Lower leg skin (tissue), 4 donors: ENCODE measurements at regions of chr15 and their contacts with region 1.

Region 1: DNA sequence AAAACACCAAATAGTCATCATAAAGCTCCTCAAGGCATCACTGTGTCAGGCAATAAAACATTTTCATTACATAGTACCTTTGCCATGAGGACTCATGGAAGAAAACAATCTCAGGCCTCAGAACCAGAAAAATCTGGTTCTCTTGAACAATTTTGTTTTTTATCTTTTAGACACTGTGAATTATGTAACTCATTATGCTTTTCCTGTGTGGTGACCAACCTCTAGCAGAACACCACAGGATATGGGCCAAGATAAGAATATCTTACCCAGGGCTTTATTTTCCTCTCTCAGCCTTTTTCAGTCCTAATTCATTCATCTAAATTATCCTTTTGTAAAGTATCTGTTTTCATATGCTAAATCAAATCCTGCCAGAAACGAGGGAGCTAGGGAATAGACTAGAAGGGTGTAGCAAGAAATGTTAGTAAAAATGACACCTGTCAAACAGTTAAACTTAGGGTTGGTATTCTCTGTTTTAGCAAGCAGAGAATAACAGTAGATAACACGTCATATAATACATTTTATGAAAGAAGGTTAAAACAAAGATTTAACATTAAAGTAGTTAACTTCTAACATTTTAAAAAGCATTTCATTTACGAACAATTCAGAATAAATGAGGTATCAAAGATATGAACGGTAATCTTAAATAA is 111.1 kb downstream of the FBXL22 start:
- DNase-seq: no peak
- H3K4me3 ChIP-seq: no peak overlapping the region
- CTCF ChIP-seq: no peak
- POLR2A ChIP-seq: no peak

Region 2: GRCh38 chr15:63735449-63735848 is 27.2 kb after region 1 on chr15:
- intact Hi-C with region 1: loop called (anchors 2 kb)
- DNase-seq: no peak
- H3K4me3 ChIP-seq: no peak overlapping the region
- CTCF ChIP-seq: no peak
- POLR2A ChIP-seq: no peak